HEK293 (cell line): ENCODE measurements at regions of chr5 and their contacts with region 1.

Region 1: GRCh38 chr5:38441453-38442246 is 114.8 kb downstream of the LIFR start:
- H3K4me3 ChIP-seq: no peak overlapping the region
- H3K27ac ChIP-seq: no peak overlapping the region
- H3K4me1 ChIP-seq: no peaks in the 10 kb centered on the region
- CTCF ChIP-seq: peak; percentile 97

Region 2: GRCh38 chr5:38382898-38383297 is 58.8 kb before region 1 on chr5:
- CTCF ChIA-PET with region 1: interaction called, 54 read pairs
- POLR2A ChIA-PET with region 1: no interaction called
- H3K4me3 ChIP-seq: no peak overlapping the region
- H3K27ac ChIP-seq: no peak overlapping the region
- H3K4me1 ChIP-seq: peaks cover 11% of the 10 kb centered on the region
- CTCF ChIP-seq: peak; percentile 83

Region 3: GRCh38 chr5:38463634-38464521 is 22.2 kb after region 1 on chr5:
- CTCF ChIA-PET with region 1: interaction called, 23 read pairs
- POLR2A ChIA-PET with region 1: interaction called, 4 read pairs
- H3K4me3 ChIP-seq: no peak overlapping the region
- H3K27ac ChIP-seq: no peak overlapping the region
- H3K4me1 ChIP-seq: peaks cover 15% of the 10 kb centered on the region
- CTCF ChIP-seq: no peak

Region 4: DNA sequence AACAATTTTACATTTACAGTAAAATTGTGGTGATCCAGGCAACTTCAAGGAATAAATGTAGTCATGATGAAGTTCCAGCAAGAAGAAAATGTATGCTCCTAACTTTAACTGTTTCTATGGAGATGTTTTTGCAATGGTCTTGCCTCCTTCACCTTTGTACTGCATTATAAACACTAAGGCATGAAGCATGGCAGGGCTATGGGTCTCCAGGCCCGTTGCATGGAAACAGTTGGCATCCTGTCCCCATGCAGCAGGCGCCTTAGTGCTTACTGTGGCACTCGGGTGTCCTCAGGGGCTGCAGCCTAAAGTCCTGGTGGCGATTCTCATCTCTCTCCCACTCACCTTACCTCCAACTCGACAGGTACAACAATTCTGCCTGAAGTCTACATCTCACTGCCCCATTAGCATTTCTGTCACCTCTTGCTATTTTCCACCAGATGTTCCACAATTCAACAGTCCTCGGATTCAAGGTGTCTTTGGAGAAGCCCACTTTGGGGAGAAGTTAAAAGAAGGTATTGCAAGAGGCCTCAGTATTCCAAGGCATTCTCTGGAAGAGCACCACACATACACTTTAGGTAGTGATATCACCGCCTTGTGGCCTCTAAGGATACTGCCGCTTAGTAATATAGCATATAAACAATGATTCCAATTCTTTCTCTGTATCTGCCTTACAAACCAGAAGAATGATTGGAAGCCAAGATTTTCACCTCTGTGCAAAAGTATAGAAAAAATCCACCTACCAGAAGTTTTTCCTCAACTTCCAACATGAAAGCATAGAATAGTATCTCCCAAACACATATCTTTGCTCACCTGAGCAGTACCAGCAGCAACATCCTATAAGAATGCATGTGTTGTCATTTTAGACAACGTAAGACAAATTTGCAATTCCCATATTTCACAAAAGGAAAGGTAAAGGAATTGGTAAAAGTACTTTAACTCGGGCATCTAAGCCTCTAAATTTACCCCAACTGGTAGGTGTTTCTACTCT is 109.7 kb after region 1 on chr5:
- CTCF ChIA-PET with region 1: interaction called, 48 read pairs
- POLR2A ChIA-PET with region 1: no interaction called
- H3K4me3 ChIP-seq: no peak overlapping the region
- H3K27ac ChIP-seq: no peak overlapping the region
- H3K4me1 ChIP-seq: peaks cover 35% of the 10 kb centered on the region
- CTCF ChIP-seq: peak; percentile 64; the same call in 1 of the 2 replicates

Region 5: DNA sequence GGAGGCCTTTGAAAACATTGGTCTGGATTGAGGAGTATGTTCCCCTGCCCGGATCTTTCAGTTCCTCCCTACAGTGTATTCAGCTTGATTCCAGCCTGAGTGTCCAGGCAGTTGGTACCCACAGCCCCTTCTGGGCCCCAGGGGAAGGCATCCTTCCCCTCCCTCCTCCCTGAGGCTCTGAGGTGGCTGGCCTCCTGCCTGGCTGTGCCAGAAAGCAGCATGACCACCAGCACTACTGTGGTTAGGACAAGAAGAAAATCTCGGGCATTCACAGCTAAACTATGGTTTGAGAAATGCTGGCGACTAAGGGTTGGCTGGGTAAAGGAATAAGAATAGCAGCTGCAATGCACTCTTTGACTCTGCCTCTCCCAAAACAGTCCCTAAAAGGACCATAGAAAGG is 199.3 kb after region 1 on chr5:
- CTCF ChIA-PET with region 1: no interaction called
- POLR2A ChIA-PET with region 1: no interaction called
- H3K4me3 ChIP-seq: no peak overlapping the region
- H3K27ac ChIP-seq: no peak overlapping the region
- H3K4me1 ChIP-seq: no peaks in the 10 kb centered on the region
- CTCF ChIP-seq: no peak

Region 6: GRCh38 chr5:38673671-38674071 is 232.0 kb after region 1 on chr5:
- CTCF ChIA-PET with region 1: interaction called, 70 read pairs
- POLR2A ChIA-PET with region 1: no interaction called
- H3K4me3 ChIP-seq: no peak overlapping the region
- H3K27ac ChIP-seq: no peak overlapping the region
- H3K4me1 ChIP-seq: peaks cover 15% of the 10 kb centered on the region
- CTCF ChIP-seq: no peak

Region 7: DNA sequence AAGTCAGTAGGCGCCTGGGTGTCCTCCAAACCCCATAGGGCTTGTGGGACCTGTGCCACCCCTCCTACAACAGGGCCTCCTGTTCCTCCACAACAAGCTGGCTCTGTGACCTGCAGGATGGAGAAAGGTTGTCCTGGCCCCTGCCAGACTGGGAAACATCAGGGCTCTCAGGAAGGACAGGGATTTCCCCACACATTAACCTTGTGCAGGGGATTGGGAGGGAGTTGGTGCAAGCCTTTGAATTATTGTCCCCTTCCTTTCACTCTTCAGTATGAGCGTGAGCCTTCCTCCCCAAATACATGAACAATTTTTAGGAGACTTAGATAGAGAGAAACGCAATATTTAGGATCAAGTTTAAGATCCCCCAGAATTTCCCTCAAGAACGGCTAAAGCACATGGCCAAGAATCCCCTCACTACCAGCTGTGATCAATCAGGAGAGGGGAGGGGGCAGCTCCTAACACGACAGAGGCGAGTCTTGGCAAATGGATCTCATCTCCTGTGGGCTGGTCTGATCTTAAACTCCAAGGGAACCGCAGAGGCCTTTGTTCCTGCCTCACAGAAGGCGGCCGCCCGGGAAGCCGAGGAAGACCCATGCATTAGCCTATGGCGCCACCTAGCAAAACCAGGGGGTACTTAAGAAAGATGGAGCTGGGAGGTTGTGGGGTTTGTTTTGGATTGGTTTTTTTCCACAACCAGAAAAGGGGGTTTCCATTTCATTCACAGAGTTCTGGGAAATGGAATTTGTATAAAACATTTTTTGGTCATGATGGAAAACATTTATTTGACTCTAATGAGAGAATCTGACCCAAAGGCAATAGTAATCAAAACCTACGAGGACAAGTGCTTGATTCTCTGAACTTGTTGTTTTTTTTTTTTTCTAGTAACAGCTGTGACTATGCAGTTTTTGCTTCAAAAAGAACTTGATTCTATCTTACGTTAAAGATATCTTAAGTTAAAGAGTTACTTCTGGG is 368.0 kb after region 1 on chr5:
- CTCF ChIA-PET with region 1: interaction called, 333 read pairs
- POLR2A ChIA-PET with region 1: interaction called, 19 read pairs
- H3K4me3 ChIP-seq: no peak overlapping the region
- H3K27ac ChIP-seq: no peak overlapping the region; the same call in 1 of the 2 replicates
- H3K4me1 ChIP-seq: peaks cover 14% of the 10 kb centered on the region
- CTCF ChIP-seq: peak; percentile 92